IMR-90 (cell line): ENCODE measurements at regions of chr6 and their contacts with region 1.

Region 1: DNA sequence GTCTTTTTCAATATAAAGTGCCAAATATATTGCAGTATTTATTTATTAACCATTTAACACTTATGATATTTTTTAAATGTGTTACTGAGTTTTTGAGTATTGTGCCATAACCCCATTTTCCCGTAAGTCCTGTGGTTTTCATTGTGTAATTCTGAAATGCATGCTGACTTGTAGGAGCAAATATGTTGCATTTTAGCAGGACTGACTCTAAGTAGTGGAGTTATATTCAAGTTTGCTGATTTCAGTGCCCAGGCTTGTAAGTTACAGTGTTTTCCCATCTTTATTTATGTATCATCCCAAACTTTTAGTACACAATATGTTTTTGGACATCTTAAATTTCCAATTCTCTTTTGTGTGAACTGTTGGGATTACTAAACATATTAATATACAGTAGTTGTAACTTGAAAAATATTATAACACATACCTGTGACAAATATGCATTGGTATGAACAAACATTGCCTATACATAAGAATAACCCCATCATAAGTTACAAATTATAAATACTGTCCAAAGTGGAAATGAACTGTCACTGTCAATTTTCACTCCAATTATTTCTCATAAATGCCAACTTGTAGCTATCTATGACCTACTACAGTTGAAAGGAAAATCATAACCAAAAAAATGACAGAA is 179.3 kb upstream of the RUNX2 start:
- DNase-seq: peak; percentile 55
- ATAC-seq: peak; percentile 80
- H3K4me3 ChIP-seq: no peak overlapping the region
- H3K27ac ChIP-seq: no peak overlapping the region
- H3K4me1 ChIP-seq: no peaks in the 10 kb centered on the region
- H3K27me3 ChIP-seq: no peaks in the 10 kb centered on the region
- CTCF ChIP-seq: no peak
- POLR2A ChIP-seq: no peak
- RAD21 ChIP-seq: no peak

Region 2: GRCh38 chr6:45021676-45022075 is 127.2 kb before region 1 on chr6:
- CTCF ChIA-PET with region 1: no interaction called
- POLR2A ChIA-PET with region 1: no interaction called
- dilution Hi-C with region 1: no loop called
- in situ Hi-C with region 1: no loop called
- intact Hi-C with region 1: no loop called
- DNase-seq: peak; percentile 43
- ATAC-seq: no peak
- H3K4me3 ChIP-seq: no peak overlapping the region
- H3K27ac ChIP-seq: no peak overlapping the region
- H3K4me1 ChIP-seq: no peaks in the 10 kb centered on the region
- H3K27me3 ChIP-seq: no peaks in the 10 kb centered on the region
- CTCF ChIP-seq: no peak
- POLR2A ChIP-seq: no peak
- RAD21 ChIP-seq: no peak

Region 3: DNA sequence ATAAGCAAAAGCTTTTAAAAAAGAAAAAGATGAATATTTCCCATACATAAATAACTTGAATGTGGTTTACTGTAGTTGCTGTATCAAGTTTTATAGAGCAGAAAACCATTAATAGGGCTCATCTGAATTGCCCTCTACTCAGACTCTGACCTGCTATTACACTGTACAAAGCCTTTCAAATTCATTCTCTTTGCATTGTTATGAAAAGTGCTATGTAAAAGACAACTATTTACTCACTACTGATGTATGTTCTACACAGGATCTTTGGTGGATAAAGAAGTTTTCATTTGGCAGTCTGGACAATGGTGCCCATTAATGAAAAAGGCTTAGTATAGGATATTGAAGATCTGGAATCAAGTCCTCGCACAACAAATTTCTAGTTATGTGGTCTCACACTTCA is 19.8 kb before region 1 on chr6:
- CTCF ChIA-PET with region 1: no interaction called
- POLR2A ChIA-PET with region 1: no interaction called
- dilution Hi-C with region 1: no loop called
- in situ Hi-C with region 1: no loop called
- intact Hi-C with region 1: loop called (anchors 2 kb)
- DNase-seq: no peak
- ATAC-seq: no peak
- H3K4me3 ChIP-seq: no peak overlapping the region
- H3K27ac ChIP-seq: no peak overlapping the region
- H3K4me1 ChIP-seq: no peaks in the 10 kb centered on the region
- H3K27me3 ChIP-seq: no peaks in the 10 kb centered on the region
- CTCF ChIP-seq: no peak
- POLR2A ChIP-seq: no peak
- RAD21 ChIP-seq: no peak